ENCODE measurements at regions of chr1 and their contacts with region 1.

Region 1: GRCh38 chr1:109201123-109201703 is 12.5 kb upstream of the SARS1 start:
- DNase-seq: peak; percentile 86
- H3K4me3 Mint-ChIP-seq: no peak overlapping the region
- H3K27ac Mint-ChIP-seq: no peak overlapping the region
- H3K4me1 Mint-ChIP-seq: peaks cover 17% of the 10 kb centered on the region
- H3K27me3 Mint-ChIP-seq: no peaks in the 10 kb centered on the region

Region 2: DNA sequence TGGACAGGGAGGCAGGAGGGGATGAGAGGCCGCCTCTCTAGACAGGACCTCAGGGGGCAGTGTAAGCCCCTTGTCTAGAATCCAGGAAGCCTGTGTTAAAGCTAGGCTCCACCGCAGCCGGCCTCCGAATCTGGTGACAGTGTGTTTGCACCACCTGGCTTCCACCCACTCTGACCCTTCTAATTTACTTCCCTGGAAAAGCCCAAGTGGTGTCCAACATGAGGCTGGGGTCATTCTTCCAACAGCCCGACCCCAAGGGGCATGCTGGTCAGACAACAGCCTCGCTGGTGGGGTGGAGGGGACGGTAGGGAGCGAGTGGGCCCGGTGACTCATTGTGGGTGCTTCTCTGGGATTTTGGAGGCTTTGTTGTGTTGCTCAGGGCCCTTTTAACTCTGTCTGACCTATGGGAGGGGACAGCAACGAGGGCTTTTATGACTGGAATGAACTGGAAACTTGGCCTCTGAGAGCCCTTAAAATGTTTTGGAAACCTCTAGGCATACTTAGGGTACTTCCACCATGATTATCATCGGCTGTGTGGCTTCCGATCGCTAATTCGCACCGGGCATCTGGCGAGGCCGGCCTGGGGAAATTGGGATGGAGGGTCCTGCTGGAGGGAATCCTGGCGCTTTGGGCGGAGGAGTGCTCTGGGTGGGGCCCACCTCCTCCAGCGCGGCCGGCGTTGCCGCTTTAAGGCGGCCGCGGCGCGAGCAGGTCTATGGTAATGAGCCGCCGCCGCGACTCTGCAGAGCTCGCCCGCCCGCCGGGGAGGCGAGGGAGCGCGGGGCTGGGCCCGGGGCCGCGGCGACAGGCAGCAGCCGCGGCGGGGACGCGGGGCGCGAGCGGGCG is 47.8 kb after region 1 on chr1 and contains the start of gene CELSR2:
- CTCF ChIA-PET with region 1: interaction called, 4 read pairs
- intact Hi-C with region 1: loop called (anchors 1 kb)
- DNase-seq: peak; percentile 60
- H3K4me3 Mint-ChIP-seq: peak within 1 kb of the TSS; percentile 49
- H3K27ac Mint-ChIP-seq: no peak within 1 kb of the TSS
- H3K4me1 Mint-ChIP-seq: peaks cover 3% of the 10 kb centered on the region
- H3K27me3 Mint-ChIP-seq: no peaks in the 10 kb centered on the region
- total RNA-seq, gene CELSR2: 1.1 to 1.2 TPM

Region 3: GRCh38 chr1:109263597-109264398 is 62.6 kb after region 1 on chr1:
- CTCF ChIA-PET with region 1: interaction called, 5 read pairs
- intact Hi-C with region 1: loop called (anchors 1 kb)
- DNase-seq: peak; percentile 84
- H3K4me3 Mint-ChIP-seq: no peak overlapping the region
- H3K27ac Mint-ChIP-seq: no peak overlapping the region
- H3K4me1 Mint-ChIP-seq: peaks cover 3% of the 10 kb centered on the region
- H3K27me3 Mint-ChIP-seq: peaks cover 1% of the 10 kb centered on the region

Region 4: GRCh38 chr1:109277434-109278204 is 76.4 kb after region 1 on chr1:
- CTCF ChIA-PET with region 1: interaction called, 4 read pairs
- intact Hi-C with region 1: loop called (anchors 1 kb)
- DNase-seq: peak; percentile 73
- H3K4me3 Mint-ChIP-seq: no peak overlapping the region
- H3K27ac Mint-ChIP-seq: no peak overlapping the region
- H3K4me1 Mint-ChIP-seq: peaks cover 4% of the 10 kb centered on the region
- H3K27me3 Mint-ChIP-seq: no peaks in the 10 kb centered on the region

Region 5: GRCh38 chr1:109282952-109283747 is 81.9 kb after region 1 on chr1 and contains the start of gene PSRC1:
- CTCF ChIA-PET with region 1: interaction called, 4 read pairs
- intact Hi-C with region 1: loop called (anchors 1 kb)
- DNase-seq: peak; percentile 94
- H3K4me3 Mint-ChIP-seq: peak within 1 kb of the TSS; percentile 94
- H3K27ac Mint-ChIP-seq: peak within 1 kb of the TSS; percentile 89
- H3K4me1 Mint-ChIP-seq: peaks cover 6% of the 10 kb centered on the region
- H3K27me3 Mint-ChIP-seq: no peaks in the 10 kb centered on the region
- total RNA-seq, gene PSRC1: 19.3 to 21.5 TPM

Region 6: GRCh38 chr1:109397538-109398342 is 196.5 kb after region 1 on chr1 and contains the start of gene SORT1:
- CTCF ChIA-PET with region 1: interaction called, 14 read pairs
- intact Hi-C with region 1: loop called (anchors 1 kb)
- DNase-seq: peak; percentile 53
- H3K4me3 Mint-ChIP-seq: peak within 1 kb of the TSS; percentile 77
- H3K27ac Mint-ChIP-seq: no peak within 1 kb of the TSS
- H3K4me1 Mint-ChIP-seq: peaks cover 8% of the 10 kb centered on the region
- H3K27me3 Mint-ChIP-seq: peaks cover 35% of the 10 kb centered on the region
- total RNA-seq, gene SORT1: 0.32 to 0.33 TPM